Dendritic cell treated with granulocyte-macrophage colony-stimulating factor and Interleukin-4, amounts not matched to agents 40 ng/mL and 50 ng/mL, for 4 days (primary cell): ENCODE measurements at regions of chrX and their contacts with region 1.

Region 1: DNA sequence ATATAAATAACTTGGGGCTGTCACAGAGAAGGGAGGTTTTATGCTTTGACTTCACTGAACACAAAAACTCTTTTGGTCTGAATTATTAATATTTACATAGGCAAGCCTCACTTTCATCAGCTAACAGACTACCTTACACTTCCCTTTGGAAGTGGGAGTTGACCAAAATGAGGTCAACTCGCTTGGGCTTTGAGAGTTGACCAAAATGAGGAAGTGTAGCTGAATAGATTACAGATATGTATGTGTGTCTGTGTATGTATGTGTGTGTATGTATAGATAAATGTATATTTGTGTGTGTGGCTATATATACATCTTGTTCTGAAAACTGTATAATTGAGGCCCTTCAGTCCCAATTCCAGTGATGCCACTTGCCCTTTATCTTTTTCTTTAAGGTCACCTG is 113.3 kb upstream of the IL13RA1 start:
- H3K4me3 Mint-ChIP-seq: no peak overlapping the region
- H3K27ac Mint-ChIP-seq: peak overlapping the region; percentile 26
- H3K4me1 Mint-ChIP-seq: peaks cover 18% of the 10 kb centered on the region
- H3K27me3 Mint-ChIP-seq: no peaks in the 10 kb centered on the region

Region 2: DNA sequence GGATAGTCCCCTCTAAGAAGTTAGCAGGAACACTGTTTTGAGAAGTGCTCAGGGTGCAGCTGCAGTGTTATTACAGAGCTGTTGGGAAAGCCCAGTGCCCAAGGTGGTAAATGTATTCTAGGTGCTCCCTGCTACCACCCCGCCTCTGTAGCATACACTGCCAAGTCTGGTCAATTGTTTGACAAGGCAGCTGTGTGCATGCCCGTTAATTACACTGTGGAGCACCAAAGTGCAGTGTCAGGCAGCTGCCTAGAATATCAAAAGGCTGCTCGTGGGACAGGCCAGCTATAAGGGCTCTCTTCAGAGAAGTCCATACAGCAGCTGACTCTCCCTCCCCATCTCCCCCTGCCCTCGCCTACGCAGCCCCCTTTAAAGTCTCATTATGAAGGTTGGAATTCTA is 397.6 kb before region 1 on chrX:
- intact Hi-C with region 1: no loop called
- H3K4me3 Mint-ChIP-seq: no peak overlapping the region
- H3K27ac Mint-ChIP-seq: peak overlapping the region; percentile 37
- H3K4me1 Mint-ChIP-seq: peaks cover 34% of the 10 kb centered on the region
- H3K27me3 Mint-ChIP-seq: peaks cover 4% of the 10 kb centered on the region

Region 3: DNA sequence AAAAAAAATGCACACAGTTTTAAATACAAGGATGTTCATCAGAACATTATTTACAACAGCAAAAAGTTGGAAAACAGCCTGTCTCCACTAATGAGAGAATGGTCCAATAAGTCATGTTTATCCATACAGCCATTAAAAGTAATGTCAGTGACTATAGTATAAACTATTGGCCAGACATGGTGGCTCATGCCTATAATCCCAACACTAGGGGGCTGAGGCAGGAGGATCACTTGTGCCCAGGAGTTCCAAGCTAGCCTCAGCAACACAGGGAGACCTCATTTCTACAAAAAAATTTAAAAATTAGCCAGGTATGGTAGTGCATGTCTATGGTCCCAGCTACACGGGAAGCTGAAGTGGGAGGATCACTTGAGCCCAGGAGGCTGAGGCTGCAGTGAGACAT is 65.1 kb after region 1 on chrX:
- intact Hi-C with region 1: loop called (anchors 10 kb)
- H3K4me3 Mint-ChIP-seq: no peak overlapping the region
- H3K27ac Mint-ChIP-seq: no peak overlapping the region
- H3K4me1 Mint-ChIP-seq: peaks cover 5% of the 10 kb centered on the region
- H3K27me3 Mint-ChIP-seq: no peaks in the 10 kb centered on the region